ENCODE measurements at regions of chr9 and their contacts with region 1.

Region 1: GRCh38 chr9:38641985-38642864 is 21.8 kb upstream of the ANKRD18A start:
- DNase-seq: no peak
- H3K4me3 ChIP-seq: no peak overlapping the region
- H3K27me3 ChIP-seq: no peaks in the 10 kb centered on the region
- CTCF ChIP-seq: peak; percentile 49

Region 2: GRCh38 chr9:38339087-38339486 is 303.1 kb before region 1 on chr9:
- CTCF ChIA-PET with region 1: no interaction called
- POLR2A ChIA-PET with region 1: no interaction called
- DNase-seq: no peak
- H3K4me3 ChIP-seq: no peak overlapping the region
- H3K27me3 ChIP-seq: peaks cover 13% of the 10 kb centered on the region
- CTCF ChIP-seq: no peak

Region 3: DNA sequence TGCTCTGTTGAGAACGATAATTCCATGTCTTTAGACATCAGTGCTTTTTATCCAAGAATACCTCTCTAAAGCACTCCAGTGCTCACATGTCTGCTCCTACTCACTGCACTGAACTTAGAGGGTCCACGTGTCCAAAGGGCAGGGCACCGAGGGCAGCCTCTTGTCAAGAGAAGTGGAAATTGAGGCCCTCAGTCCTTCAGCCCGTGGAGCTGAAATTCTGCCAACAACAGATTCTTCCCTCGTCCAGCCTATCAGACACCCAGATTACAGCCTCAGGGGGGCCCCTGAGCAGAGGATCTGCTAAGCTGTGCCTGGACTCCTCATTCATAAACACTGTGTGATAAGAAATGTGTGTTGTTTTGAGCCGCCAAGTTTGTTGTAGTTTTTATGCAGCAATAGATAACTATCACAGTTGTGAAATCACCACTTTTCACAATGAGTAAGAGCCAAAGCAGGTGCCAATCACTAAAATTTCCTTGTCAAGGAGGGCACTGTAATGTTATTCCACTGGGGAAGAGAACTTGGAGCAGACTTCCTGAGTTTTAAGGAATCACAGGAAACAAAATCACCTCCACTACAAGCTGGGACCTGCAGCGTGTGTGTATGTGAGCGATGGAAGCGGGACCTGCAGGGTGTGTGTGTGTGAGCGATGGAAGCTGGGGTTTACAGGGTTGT is 159.2 kb before region 1 on chr9:
- CTCF ChIA-PET with region 1: no interaction called
- POLR2A ChIA-PET with region 1: no interaction called
- DNase-seq: no peak
- H3K4me3 ChIP-seq: no peak overlapping the region
- H3K27me3 ChIP-seq: no peaks in the 10 kb centered on the region
- CTCF ChIP-seq: no peak

Region 4: GRCh38 chr9:38671748-38672147 is 29.5 kb after region 1 on chr9:
- CTCF ChIA-PET with region 1: interaction called, 11 read pairs
- POLR2A ChIA-PET with region 1: no interaction called
- DNase-seq: no peak
- H3K4me3 ChIP-seq: no peak overlapping the region
- H3K27me3 ChIP-seq: no peaks in the 10 kb centered on the region
- CTCF ChIP-seq: no peak

Measured in BJ (cell line).